ENCODE measurements at regions of chrX and their contacts with region 1.

Region 1: GRCh38 chrX:49137492-49137891 is 14.0 kb upstream of the GPKOW start:
- DNase-seq: no peak
- CTCF ChIP-seq: no peak

Region 2: GRCh38 chrX:49155900-49156837 is 18.7 kb after region 1 on chrX:
- CTCF ChIA-PET with region 1: interaction called, 17 read pairs
- POLR2A ChIA-PET with region 1: no interaction called
- DNase-seq: peak; percentile 85
- CTCF ChIP-seq: peak; percentile 74

Measured in GM10248 (cell line).